ENCODE measurements at regions of chr19 and their contacts with region 1.

Region 1: GRCh38 chr19:6737284-6738046 is at the start of gene GPR108:
- DNase-seq: peak; percentile 100
- ATAC-seq: peak; percentile 82
- H3K4me3 ChIP-seq: peak within 1 kb of the TSS; percentile 100
- H3K27ac ChIP-seq: peak within 1 kb of the TSS; percentile 92
- H3K4me1 ChIP-seq: peaks cover 30% of the 10 kb centered on the region
- H3K27me3 ChIP-seq: no peaks in the 10 kb centered on the region
- CTCF ChIP-seq: no peak
- EP300 ChIP-seq: no peak
- POLR2A ChIP-seq: peak; percentile 66
- RAD21 ChIP-seq: no peak
- polyA plus RNA-seq, gene GPR108: 4.4 to 17.6 TPM

Region 2: DNA sequence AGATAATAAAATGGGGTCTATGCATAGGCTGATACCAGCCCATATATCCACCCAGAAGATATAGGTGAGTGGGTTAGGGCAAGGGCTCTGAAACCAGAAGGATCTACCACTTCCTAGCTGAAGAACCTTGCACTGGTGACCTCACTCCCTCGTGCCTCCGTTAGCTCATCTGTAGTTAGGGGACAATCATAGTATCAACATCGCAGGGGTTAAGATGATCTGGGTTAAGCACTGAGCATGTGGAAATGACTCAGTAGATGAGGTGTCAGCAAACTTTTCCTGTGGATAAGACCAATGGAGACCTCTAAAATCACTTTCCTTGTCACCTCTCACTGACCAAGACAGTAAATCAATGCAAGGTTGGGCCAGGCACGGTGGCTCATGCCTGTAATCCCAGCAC is 98.0 kb before region 1 on chr19:
- CTCF ChIA-PET with region 1: interaction called, 20 read pairs
- POLR2A ChIA-PET with region 1: interaction called, 4 read pairs
- RAD21 ChIA-PET with region 1: interaction called, 10 read pairs
- SMC1A ChIA-PET with region 1: interaction called, 10 read pairs
- in situ Hi-C with region 1: no loop called
- intact Hi-C with region 1: no loop called
- DNase-seq: no peak
- ATAC-seq: peak; percentile 17
- H3K4me3 ChIP-seq: no peak overlapping the region
- H3K27ac ChIP-seq: peak overlapping the region; percentile 13
- H3K4me1 ChIP-seq: peaks cover 30% of the 10 kb centered on the region
- H3K27me3 ChIP-seq: no peaks in the 10 kb centered on the region
- CTCF ChIP-seq: no peak
- EP300 ChIP-seq: no peak
- POLR2A ChIP-seq: no peak
- RAD21 ChIP-seq: no peak

Region 3: DNA sequence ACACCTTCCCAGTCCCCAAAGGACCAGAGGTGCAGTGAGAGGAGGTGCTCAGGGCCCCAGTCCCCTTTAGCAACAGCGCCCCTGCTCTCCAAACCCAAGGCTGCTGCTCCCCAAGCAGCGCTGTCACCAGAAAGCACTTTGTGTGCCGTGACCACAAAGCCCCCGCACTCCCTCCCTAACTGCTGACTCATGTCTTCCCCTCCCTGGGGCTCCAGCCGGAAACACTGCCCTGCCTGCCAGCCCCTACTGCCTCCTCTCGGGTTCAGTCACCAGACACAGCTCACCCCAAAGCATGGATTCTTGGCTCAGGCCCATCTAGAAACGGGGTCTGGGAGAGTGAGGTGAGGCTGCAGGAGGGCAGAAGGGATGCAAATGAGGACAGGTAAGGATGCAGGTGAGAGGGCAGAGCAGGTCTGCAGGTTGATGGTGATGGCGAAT is 62.6 kb before region 1 on chr19:
- CTCF ChIA-PET with region 1: interaction called, 9 read pairs
- POLR2A ChIA-PET with region 1: interaction called, 13 read pairs
- RAD21 ChIA-PET with region 1: interaction called, 21 read pairs
- SMC1A ChIA-PET with region 1: interaction called, 25 read pairs
- in situ Hi-C with region 1: no loop called
- intact Hi-C with region 1: loop called (anchors 2 kb)
- DNase-seq: peak; percentile 87
- ATAC-seq: peak; percentile 75
- H3K4me3 ChIP-seq: peak overlapping the region; percentile 40; the same call in 1 of the 2 replicates
- H3K27ac ChIP-seq: peak overlapping the region; percentile 69
- H3K4me1 ChIP-seq: peaks cover 35% of the 10 kb centered on the region
- H3K27me3 ChIP-seq: no peaks in the 10 kb centered on the region
- CTCF ChIP-seq: peak in 2 of 3 experiments; percentile 30 to 36; a peak in 4 of 6 replicates
- EP300 ChIP-seq: peak; percentile 75 to 83
- POLR2A ChIP-seq: 0 out of 2 replicates have a peak, but pooled peaks have one; percentile 37
- RAD21 ChIP-seq: peak; percentile 23; the same call in 1 of the 2 replicates

Region 4: DNA sequence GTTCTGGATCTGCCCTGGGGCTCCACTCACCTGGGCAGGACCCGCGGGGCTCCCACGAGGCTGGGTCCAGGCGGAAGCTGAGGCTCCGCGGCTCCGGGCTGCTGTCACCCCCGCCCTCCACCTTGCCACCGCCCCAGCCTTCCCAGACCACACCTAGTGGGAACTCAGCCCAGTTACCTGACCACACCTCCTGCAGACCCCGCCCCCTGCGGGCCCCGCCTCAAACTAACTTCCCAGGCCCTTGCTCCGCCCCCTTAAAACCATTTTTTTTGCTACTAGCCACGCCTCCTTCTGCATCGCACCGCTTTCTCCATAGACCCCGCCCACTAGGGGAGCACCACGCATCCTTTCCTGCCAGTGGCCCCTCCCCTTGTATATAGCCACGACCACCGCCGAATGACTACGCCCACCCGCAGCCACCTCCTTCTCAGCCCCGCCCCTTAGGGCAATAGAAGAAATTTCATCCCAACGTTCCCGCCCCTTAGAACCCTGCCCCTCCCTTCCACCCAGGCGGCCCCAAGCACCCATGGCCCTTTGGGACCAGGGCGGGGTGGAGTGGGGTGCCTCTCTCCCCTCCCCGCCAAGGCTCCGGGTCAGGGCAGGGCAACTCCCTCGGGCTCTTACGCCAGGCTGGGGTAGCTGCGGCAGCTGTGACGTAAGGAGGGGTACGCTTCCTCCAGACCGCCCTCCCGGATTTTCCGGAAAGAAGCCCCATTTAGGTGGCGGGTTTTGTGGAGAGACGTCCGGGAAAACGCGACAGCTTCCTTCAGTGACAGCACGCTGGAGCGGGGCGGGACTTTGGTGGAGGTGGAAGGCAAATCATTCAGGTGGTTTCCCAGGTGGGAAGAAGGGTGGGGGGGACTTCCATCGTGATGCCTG is 30.1 kb after region 1 on chr19 and contains the start of gene SH2D3A:
- CTCF ChIA-PET with region 1: interaction called, 38 read pairs
- POLR2A ChIA-PET with region 1: interaction called, 24 read pairs
- RAD21 ChIA-PET with region 1: interaction called, 29 read pairs
- SMC1A ChIA-PET with region 1: interaction called, 37 read pairs
- in situ Hi-C with region 1: no loop called
- intact Hi-C with region 1: loop called (anchors 2 kb)
- DNase-seq: peak; percentile 92
- ATAC-seq: peak; percentile 79
- H3K4me3 ChIP-seq: peak within 1 kb of the TSS; percentile 85
- H3K27ac ChIP-seq: peak within 1 kb of the TSS; percentile 83
- H3K4me1 ChIP-seq: peaks cover 23% of the 10 kb centered on the region
- H3K27me3 ChIP-seq: no peaks in the 10 kb centered on the region
- CTCF ChIP-seq: no peak
- EP300 ChIP-seq: no peak; a peak in 1 of 4 replicates
- POLR2A ChIP-seq: peak; percentile 70; the same call in 1 of the 2 replicates
- RAD21 ChIP-seq: no peak
- polyA plus RNA-seq, gene SH2D3A: 0.77 to 1.4 TPM

Region 5: GRCh38 chr19:6862673-6863078 is 125.2 kb after region 1 on chr19:
- CTCF ChIA-PET with region 1: interaction called, 104 read pairs
- POLR2A ChIA-PET with region 1: interaction called, 25 read pairs
- RAD21 ChIA-PET with region 1: interaction called, 76 read pairs
- SMC1A ChIA-PET with region 1: interaction called, 55 read pairs
- in situ Hi-C with region 1: loop called (anchors 5 kb)
- intact Hi-C with region 1: loop called (anchors 1 kb)
- DNase-seq: peak; percentile 80
- ATAC-seq: peak; percentile 94
- H3K4me3 ChIP-seq: peak overlapping the region; percentile 67; the same call in 1 of the 2 replicates
- H3K27ac ChIP-seq: peak overlapping the region; percentile 56; the same call in 1 of the 2 replicates
- H3K4me1 ChIP-seq: peaks cover 11% of the 10 kb centered on the region
- H3K27me3 ChIP-seq: no peaks in the 10 kb centered on the region
- CTCF ChIP-seq: peak; percentile 92 to 99 (median 99); a peak in 5 of 6 replicates
- EP300 ChIP-seq: no peak
- POLR2A ChIP-seq: peak; percentile 65
- RAD21 ChIP-seq: peak; percentile 88